ENCODE measurements at regions of chr19 and their contacts with region 1.

Region 1: GRCh38 chr19:2475702-2476450 is at the start of gene GADD45B:
- DNase-seq: peak; percentile 98
- H3K4me3 Mint-ChIP-seq: peak within 1 kb of the TSS; percentile 99
- H3K27ac Mint-ChIP-seq: peak within 1 kb of the TSS; percentile 97
- H3K4me1 Mint-ChIP-seq: peaks cover 22% of the 10 kb centered on the region
- H3K27me3 Mint-ChIP-seq: no peaks in the 10 kb centered on the region
- total RNA-seq, gene GADD45B: 107 to 112 TPM

Region 2: GRCh38 chr19:2455851-2456570 is 19.9 kb before region 1 on chr19:
- CTCF ChIA-PET with region 1: no interaction called
- intact Hi-C with region 1: loop called (anchors 2 kb)
- DNase-seq: peak; percentile 71
- H3K4me3 Mint-ChIP-seq: peak overlapping the region; percentile 86
- H3K27ac Mint-ChIP-seq: peak overlapping the region; percentile 87
- H3K4me1 Mint-ChIP-seq: peaks cover 27% of the 10 kb centered on the region
- H3K27me3 Mint-ChIP-seq: no peaks in the 10 kb centered on the region

Region 3: GRCh38 chr19:2543463-2544442 is 67.9 kb after region 1 on chr19:
- CTCF ChIA-PET with region 1: no interaction called
- intact Hi-C with region 1: loop called (anchors 1 kb)
- DNase-seq: peak; percentile 89
- H3K4me3 Mint-ChIP-seq: peak overlapping the region; percentile 63
- H3K27ac Mint-ChIP-seq: no peak overlapping the region
- H3K4me1 Mint-ChIP-seq: peaks cover 17% of the 10 kb centered on the region
- H3K27me3 Mint-ChIP-seq: no peaks in the 10 kb centered on the region

Region 4: GRCh38 chr19:2561895-2562294 is 86.0 kb after region 1 on chr19:
- CTCF ChIA-PET with region 1: interaction called, 5 read pairs
- intact Hi-C with region 1: loop called (anchors 1 kb)
- DNase-seq: peak; percentile 89
- H3K4me3 Mint-ChIP-seq: peak overlapping the region; percentile 74
- H3K27ac Mint-ChIP-seq: peak overlapping the region; percentile 91
- H3K4me1 Mint-ChIP-seq: peaks cover 26% of the 10 kb centered on the region
- H3K27me3 Mint-ChIP-seq: no peaks in the 10 kb centered on the region

Region 5: DNA sequence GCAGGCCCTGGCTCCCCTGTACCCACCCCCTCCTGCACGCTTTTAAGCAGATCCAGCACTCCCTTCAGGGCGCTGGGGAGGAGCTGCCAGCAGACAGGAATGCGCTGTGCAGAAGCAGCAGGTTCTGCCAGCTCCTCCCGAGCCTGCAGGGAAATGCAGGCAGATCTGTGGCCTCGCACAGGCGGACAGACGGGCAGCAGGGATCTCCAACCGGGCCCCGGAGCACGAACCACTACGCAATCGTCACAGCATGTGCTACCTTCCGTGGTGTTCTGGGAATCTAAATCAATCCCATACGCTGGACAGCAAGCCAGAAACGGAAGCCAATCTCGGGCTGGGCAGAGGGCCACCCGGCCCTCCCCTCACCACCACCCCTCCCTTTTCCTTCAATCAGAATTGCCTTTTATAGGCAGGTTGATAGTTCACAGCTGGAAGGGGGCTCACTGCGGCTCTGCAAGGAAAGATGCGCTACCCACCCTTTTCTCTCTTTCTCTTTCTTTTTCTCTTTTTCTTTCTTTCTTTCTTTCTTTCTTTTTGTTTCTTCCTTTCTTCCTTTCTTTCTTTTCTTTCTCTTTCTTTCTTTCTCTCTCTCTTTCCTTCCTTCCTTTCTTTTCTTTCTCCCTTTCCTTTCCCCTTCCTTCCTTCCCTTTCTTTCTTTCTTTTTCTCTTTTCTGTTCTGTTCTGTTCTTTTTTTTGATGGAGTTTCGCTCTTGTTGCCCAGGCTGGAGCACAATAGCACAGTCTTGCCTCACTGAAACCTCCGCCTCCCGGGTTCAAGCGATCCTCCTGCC is 126.7 kb after region 1 on chr19:
- CTCF ChIA-PET with region 1: interaction called, 7 read pairs
- intact Hi-C with region 1: loop called (anchors 2 kb)
- DNase-seq: no peak
- H3K4me3 Mint-ChIP-seq: no peak overlapping the region
- H3K27ac Mint-ChIP-seq: no peak overlapping the region
- H3K4me1 Mint-ChIP-seq: peaks cover 16% of the 10 kb centered on the region
- H3K27me3 Mint-ChIP-seq: peaks cover 3% of the 10 kb centered on the region

Region 6: GRCh38 chr19:2618611-2619010 is 142.7 kb after region 1 on chr19:
- CTCF ChIA-PET with region 1: interaction called, 66 read pairs
- intact Hi-C with region 1: loop called (anchors 1 kb)
- DNase-seq: peak; percentile 97
- H3K4me3 Mint-ChIP-seq: peak overlapping the region; percentile 53
- H3K27ac Mint-ChIP-seq: peak overlapping the region; percentile 91
- H3K4me1 Mint-ChIP-seq: peaks cover 72% of the 10 kb centered on the region
- H3K27me3 Mint-ChIP-seq: no peaks in the 10 kb centered on the region

Region 7: DNA sequence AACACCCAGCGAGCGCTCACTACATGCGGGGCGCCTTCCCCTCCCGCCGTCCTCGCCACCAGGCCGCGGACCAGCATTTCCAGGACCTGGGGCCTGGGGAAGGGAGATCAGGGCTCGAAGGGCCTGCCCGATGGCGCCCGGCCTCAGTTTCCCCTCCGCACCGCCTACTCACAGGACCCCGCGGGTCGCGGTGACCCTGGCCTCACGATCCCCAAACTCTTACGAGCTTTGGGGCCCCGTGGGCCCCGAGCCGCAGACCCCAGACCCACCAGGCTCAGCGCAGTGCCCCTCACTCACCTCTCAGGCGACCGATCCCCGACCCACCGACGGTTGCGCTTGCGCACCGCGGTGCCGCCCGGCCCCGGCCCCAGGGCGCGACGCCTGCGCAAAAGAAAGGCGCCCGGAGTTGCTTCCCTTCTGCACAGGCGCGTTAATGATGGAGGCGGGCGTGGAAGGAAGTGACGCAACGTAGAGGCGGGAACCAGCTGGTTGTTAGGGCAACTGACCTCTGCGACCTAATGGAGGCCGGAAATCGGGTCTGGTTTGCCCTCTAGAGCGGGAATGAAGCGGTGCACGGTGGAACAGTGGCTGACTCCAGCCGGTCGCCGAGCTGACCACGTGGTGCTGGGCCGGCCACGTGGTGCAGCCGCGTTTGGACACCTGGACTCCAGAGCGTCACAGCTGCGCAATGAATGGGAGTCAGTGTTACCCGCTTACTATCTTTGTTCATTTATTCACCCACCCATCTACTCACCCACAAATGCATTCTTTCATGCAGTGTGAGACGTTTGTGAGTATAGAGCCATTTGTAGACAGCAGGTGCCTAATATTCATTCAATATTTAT is 307.3 kb after region 1 on chr19 and contains the start of gene SGTA:
- CTCF ChIA-PET with region 1: no interaction called
- intact Hi-C with region 1: loop called (anchors 10 kb)
- DNase-seq: peak; percentile 99
- H3K4me3 Mint-ChIP-seq: peak within 1 kb of the TSS; percentile 94
- H3K27ac Mint-ChIP-seq: peak within 1 kb of the TSS; percentile 91
- H3K4me1 Mint-ChIP-seq: peaks cover 65% of the 10 kb centered on the region
- H3K27me3 Mint-ChIP-seq: no peaks in the 10 kb centered on the region
- total RNA-seq, gene SGTA: 44.3 to 44.6 TPM

Measured in activated naive CD4-positive, alpha-beta T cell treated with anti-CD3 and anti-CD28 coated beads for 36 hours (primary cell).